ENCODE measurements at regions of chr19 and their contacts with region 1.

Region 1: DNA sequence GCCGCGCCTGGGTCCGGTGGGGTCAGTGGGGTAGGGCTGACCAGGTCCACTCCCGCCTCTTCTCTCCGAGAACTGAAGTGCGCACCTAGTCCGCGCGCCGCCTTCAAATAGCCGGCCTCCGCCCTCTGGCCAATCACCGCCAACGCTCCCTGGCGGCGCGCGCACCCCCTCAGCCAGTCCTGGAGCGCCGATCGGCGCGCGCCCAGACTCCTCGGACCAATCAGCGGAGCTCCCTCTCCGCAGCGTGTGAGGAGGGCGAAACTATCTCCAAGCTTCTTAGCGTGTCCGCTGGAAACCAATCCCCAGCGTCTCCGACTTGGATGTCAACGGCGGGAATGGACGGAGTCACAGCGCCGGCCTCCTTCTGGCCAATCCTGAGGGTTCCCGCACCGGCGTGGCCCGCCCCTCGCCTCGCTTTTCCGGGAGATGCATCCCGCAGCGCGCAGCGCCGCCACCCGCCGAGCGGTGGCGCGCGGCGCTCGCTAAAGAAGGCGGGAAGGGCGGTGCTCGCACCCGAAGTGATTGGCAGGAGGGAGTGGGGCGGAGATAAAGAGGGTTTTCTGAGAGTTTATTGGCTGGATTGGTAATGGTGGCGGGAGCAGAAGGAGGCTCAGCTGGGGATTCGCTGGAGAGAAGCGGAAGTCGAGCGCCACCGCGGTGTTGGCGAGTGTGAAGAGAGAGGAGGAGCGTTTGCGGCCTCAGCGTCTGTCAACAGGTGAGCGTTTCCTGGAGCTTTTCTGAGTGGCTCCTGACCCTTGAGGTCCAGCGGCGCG is at the start of gene ASF1B:
- DNase-seq: peak; percentile 99 to 100
- ATAC-seq: peak; percentile 86 to 94
- H3K4me3 ChIP-seq: peak within 1 kb of the TSS; percentile 65 to 81 (median 76)
- H3K27ac ChIP-seq: peak within 1 kb of the TSS; percentile 91 to 99 (median 98)
- H3K4me1 ChIP-seq: peaks cover 24 to 32% of the 10 kb centered on the region in 2 donors
- H3K27me3 ChIP-seq: no peaks in the 10 kb centered on the region
- CTCF ChIP-seq: peak; percentile 86 to 92 (median 87)
- POLR2A ChIP-seq: peak; percentile 81 to 87
- total RNA-seq, gene ASF1B: 1.2 to 4.1 (median 1.5) TPM in 3 of 4 donors, not detected in the other

Region 2: DNA sequence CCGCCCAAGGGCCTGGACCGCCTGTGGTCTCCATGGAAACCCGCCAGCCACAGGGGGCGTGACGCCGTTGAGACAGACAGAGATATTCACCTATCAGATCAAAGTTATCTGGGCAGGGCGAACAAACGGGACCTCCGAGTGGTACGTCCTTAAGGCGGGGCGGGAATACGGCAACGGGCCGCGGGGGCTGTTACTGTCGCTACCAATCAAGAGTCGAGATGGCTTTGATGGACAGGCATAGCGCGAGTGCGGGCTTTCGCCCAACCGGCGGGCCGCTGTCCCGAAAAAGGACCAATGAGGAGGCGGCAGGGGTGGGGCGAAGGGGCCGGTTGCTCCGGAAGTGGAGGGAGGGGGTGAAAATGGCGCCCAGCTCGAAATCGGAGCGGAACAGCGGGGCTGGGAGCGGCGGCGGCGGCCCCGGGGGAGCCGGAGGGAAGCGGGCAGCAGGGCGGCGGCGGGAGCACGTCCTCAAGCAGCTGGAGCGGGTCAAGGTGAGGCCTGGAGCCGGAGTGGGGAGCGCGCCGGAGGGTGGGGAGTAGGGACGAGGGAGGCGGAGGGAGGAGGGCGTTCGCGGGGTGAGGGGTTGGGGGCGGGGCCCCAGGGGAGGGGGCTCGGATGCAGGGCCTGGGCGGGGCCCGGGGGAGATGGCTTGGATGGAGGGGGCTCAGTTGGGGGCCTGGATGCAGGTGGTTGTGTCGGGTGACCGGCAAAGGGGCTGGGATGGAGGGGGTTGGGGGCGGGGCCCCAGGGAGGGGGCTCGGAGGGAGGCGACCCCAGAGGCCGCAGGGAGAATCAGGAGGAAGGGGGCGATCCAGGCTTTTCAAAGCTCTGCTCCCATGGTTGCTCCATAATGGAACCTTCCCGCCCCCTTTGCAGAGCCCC is 184.3 kb before region 1 on chr19 and contains the start of gene DCAF15:
- in situ Hi-C with region 1: no loop called
- intact Hi-C with region 1: loop called (anchors 2 kb)
- DNase-seq: peak; percentile 100
- ATAC-seq: peak; percentile 98 to 99
- H3K4me3 ChIP-seq: peak within 1 kb of the TSS; percentile 64 to 86 (median 80)
- H3K27ac ChIP-seq: peak within 1 kb of the TSS; percentile 87 to 90 (median 89)
- H3K4me1 ChIP-seq: peaks cover 18 to 26% of the 10 kb centered on the region in 2 donors
- H3K27me3 ChIP-seq: no peaks in the 10 kb centered on the region
- CTCF ChIP-seq: no peak
- POLR2A ChIP-seq: peak; percentile 44 to 53
- total RNA-seq, gene DCAF15: 11.2 to 38.8 (median 18.0) TPM

Region 3: GRCh38 chr19:14006243-14006765 is 130.4 kb before region 1 on chr19 and contains the start of gene RFX1:
- in situ Hi-C with region 1: no loop called
- intact Hi-C with region 1: loop called (anchors 5 kb)
- DNase-seq: peak; percentile 99 to 100
- ATAC-seq: peak; percentile 82 to 85
- H3K4me3 ChIP-seq: peak within 1 kb of the TSS; percentile 84 to 97 (median 92)
- H3K27ac ChIP-seq: peak within 1 kb of the TSS; percentile 96 to 100 (median 99)
- H3K4me1 ChIP-seq: peaks cover 34 to 45% of the 10 kb centered on the region in 2 donors
- H3K27me3 ChIP-seq: no peaks in the 10 kb centered on the region
- CTCF ChIP-seq: peak in 1 of 5 experiments; percentile 41
- POLR2A ChIP-seq: no peak
- total RNA-seq, gene RFX1: 2.7 to 7.2 (median 4.4) TPM

Region 4: DNA sequence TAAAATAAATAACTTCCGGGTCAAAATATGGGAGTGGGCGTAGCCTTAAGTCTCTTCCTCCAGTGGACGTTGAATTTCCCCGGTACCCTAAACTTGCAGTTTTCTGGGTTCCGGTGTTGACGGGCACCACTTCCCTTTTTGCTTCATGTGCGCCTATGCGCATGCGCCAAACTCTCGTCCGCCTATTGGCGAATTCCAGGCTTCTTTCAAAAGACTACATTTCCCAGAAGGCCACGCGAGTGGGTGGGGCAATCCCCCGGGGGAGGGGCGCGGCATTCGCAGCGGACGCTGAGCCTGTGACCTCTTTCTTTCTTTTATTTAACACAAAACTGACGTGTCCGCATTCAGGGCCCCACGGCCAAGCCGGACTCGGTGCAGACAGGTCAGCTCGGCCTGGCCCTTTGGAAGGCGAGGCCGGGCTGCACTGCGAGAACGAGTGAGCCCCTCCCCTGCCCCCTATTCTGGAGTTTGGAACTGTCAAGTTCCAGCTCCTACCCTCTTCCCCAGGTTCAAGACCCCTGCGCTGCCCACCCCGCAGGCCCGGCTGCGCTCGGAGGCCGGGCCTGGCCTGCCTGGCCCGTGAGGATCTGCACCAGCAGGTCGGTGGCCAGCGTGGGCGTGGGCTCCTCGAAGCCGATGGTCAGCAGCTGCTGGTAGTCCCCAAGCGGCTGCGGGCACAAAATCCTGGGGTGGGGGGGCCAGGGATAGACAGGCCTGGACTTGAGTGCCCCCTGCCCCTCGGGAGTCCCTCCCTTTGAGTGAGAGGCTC is 55.2 kb before region 1 on chr19:
- in situ Hi-C with region 1: no loop called
- intact Hi-C with region 1: loop called (anchors 2 kb)
- DNase-seq: peak; percentile 98 to 99
- ATAC-seq: peak; percentile 98 to 100
- H3K4me3 ChIP-seq: peak overlapping the region; percentile 62 to 97 (median 93)
- H3K27ac ChIP-seq: peak overlapping the region; percentile 80 to 98 (median 94)
- H3K4me1 ChIP-seq: peaks cover 17 to 18% of the 10 kb centered on the region in 2 donors
- H3K27me3 ChIP-seq: no peaks in the 10 kb centered on the region
- CTCF ChIP-seq: no peak
- POLR2A ChIP-seq: peak; percentile 72 to 76

Region 5: DNA sequence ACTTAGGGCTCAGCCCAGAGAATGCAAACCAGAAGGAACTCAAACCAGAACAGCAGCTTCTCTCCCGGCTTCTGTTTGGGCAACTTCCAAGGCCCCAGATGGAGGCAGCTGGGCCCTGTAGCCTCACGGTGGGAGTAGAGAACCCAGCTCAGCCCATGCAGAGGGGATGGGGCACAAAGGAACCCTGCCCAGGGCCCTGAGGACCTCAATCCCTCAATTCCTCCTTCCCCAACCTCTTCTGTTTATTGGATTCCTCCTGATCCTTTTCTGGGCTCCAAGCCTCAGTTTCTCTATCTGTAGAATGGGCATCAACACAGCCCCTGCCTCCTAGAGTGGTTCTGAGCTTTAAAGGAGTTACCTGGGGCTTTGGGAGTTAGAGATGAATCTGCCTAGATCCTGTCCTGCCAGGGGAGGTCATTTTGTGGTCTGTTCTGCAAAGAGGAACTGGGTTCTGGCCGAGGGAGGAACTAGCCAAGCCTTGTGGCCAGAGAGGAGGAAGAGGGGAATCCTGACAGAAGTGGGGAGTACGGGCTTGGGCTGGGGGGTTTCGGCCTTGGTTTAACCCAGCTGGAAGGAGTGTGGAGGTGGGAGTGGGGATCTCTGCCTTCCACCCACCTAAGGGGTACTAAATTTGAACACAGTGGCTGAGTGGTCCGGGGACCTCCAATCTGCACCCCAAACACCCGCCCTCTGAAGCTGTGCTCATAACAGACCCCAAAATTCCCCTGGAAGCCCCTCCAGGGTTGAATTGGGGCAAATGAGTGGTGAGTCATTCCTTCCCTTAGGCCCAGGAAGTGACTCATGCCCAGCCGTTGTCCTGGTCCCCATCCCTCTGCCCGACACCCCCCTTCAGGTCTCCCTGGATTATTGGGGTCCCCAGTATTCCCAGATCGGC is 247.2 kb after region 1 on chr19:
- in situ Hi-C with region 1: no loop called
- intact Hi-C with region 1: loop called (anchors 2 kb)
- DNase-seq: peak; percentile 27 to 47
- ATAC-seq: no peak
- H3K4me3 ChIP-seq: peak overlapping the region; percentile 33 to 74 (median 38)
- H3K27ac ChIP-seq: peak overlapping the region; percentile 64 to 97 (median 86)
- H3K4me1 ChIP-seq: peaks cover 29 to 30% of the 10 kb centered on the region in 2 donors
- H3K27me3 ChIP-seq: no peaks in the 10 kb centered on the region
- CTCF ChIP-seq: no peak
- POLR2A ChIP-seq: no peak

Region 6: GRCh38 chr19:14405758-14406644 is 269.3 kb after region 1 on chr19:
- in situ Hi-C with region 1: no loop called
- intact Hi-C with region 1: loop called (anchors 5 kb)
- DNase-seq: peak; percentile 61 to 73
- ATAC-seq: peak; percentile 88 to 91
- H3K4me3 ChIP-seq: peak overlapping the region in 3 of 4 donors; percentile 43 to 49 (median 47)
- H3K27ac ChIP-seq: peak overlapping the region; percentile 74 to 82 (median 80)
- H3K4me1 ChIP-seq: no peaks in the 10 kb centered on the region
- H3K27me3 ChIP-seq: no peaks in the 10 kb centered on the region
- CTCF ChIP-seq: peak; percentile 74 to 98 (median 90)
- POLR2A ChIP-seq: no peak

Measured in gastrocnemius medialis (tissue), 4 donors.